ENCODE measurements at regions of chr17 and their contacts with region 1.

Region 1: GRCh38 chr17:51153210-51154072 is at the start of gene NME1:
- DNase-seq: peak; percentile 99
- H3K4me3 Mint-ChIP-seq: no peak within 1 kb of the TSS
- H3K27ac Mint-ChIP-seq: no peak within 1 kb of the TSS
- H3K4me1 Mint-ChIP-seq: peaks cover 27% of the 10 kb centered on the region
- H3K27me3 Mint-ChIP-seq: no peaks in the 10 kb centered on the region
- total RNA-seq, gene NME1: 259 to 263 TPM

Region 2: GRCh38 chr17:50547035-50547735 is 606.3 kb before region 1 on chr17 and contains the start of gene SPATA20:
- CTCF ChIA-PET with region 1: no interaction called
- intact Hi-C with region 1: loop called (anchors 10 kb)
- DNase-seq: peak; percentile 92
- H3K4me3 Mint-ChIP-seq: peak within 1 kb of the TSS; percentile 74
- H3K27ac Mint-ChIP-seq: peak within 1 kb of the TSS; percentile 67
- H3K4me1 Mint-ChIP-seq: peaks cover 9% of the 10 kb centered on the region
- H3K27me3 Mint-ChIP-seq: peaks cover 2% of the 10 kb centered on the region
- total RNA-seq, gene SPATA20: 15.8 to 16.1 TPM

Region 3: GRCh38 chr17:50853015-50853615 is 300.3 kb before region 1 on chr17:
- CTCF ChIA-PET with region 1: interaction called, 4 read pairs
- intact Hi-C with region 1: loop called (anchors 1 kb)
- DNase-seq: no peak
- H3K4me3 Mint-ChIP-seq: no peak overlapping the region
- H3K27ac Mint-ChIP-seq: no peak overlapping the region
- H3K4me1 Mint-ChIP-seq: peaks cover 14% of the 10 kb centered on the region
- H3K27me3 Mint-ChIP-seq: no peaks in the 10 kb centered on the region

Region 4: GRCh38 chr17:51000835-51001638 is 152.4 kb before region 1 on chr17:
- CTCF ChIA-PET with region 1: interaction called, 49 read pairs
- intact Hi-C with region 1: loop called (anchors 1 kb)
- DNase-seq: peak; percentile 18
- H3K4me3 Mint-ChIP-seq: no peak overlapping the region
- H3K27ac Mint-ChIP-seq: no peak overlapping the region
- H3K4me1 Mint-ChIP-seq: no peaks in the 10 kb centered on the region
- H3K27me3 Mint-ChIP-seq: no peaks in the 10 kb centered on the region

Region 5: DNA sequence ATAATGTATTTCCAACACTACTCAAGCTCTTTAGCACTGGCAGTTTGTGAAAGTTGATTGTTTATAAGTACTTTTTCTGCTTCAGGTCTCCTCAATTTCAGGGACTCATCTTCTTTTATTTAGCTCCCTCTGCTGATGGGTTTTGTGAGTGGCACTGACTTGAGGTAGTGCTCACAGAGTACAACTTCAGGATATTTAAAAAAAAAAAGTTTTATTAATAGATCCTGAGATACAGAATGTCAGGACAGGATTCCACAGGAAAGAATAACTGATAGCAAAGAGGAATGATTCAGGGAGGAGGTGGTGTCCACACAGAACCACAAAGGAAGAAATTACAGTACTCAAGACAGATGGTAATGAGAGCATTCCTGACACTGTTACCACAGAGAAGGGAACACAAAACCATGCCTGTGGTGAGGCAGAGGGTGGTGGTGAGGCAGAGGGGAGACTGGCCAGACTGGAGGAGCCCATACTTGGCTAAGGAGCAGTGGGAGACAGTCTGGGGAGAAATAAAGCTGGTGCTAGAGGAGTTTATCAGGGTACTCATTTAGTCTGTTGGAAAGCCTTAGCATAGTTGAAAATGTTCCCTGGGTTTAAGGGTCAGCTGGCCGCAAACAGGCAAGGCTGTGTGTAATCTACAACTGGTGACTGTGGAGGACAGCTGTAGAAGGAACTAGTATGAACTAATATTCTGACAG is 96.5 kb before region 1 on chr17:
- CTCF ChIA-PET with region 1: interaction called, 3 read pairs
- intact Hi-C with region 1: loop called (anchors 1 kb)
- DNase-seq: peak; percentile 39
- H3K4me3 Mint-ChIP-seq: no peak overlapping the region
- H3K27ac Mint-ChIP-seq: no peak overlapping the region
- H3K4me1 Mint-ChIP-seq: no peaks in the 10 kb centered on the region
- H3K27me3 Mint-ChIP-seq: no peaks in the 10 kb centered on the region

Region 6: GRCh38 chr17:51260125-51260880 is 106.9 kb after region 1 on chr17 and contains the start of gene UTP18:
- CTCF ChIA-PET with region 1: no interaction called
- intact Hi-C with region 1: loop called (anchors 1 kb)
- DNase-seq: peak; percentile 96
- H3K4me3 Mint-ChIP-seq: peak within 1 kb of the TSS; percentile 88
- H3K27ac Mint-ChIP-seq: peak within 1 kb of the TSS; percentile 98
- H3K4me1 Mint-ChIP-seq: peaks cover 66% of the 10 kb centered on the region
- H3K27me3 Mint-ChIP-seq: no peaks in the 10 kb centered on the region
- total RNA-seq, gene UTP18: 54.4 to 54.5 TPM

Measured in activated naive CD4-positive, alpha-beta T cell treated with anti-CD3 and anti-CD28 coated beads for 36 hours (primary cell).